Caco-2 (cell line): ENCODE measurements at regions of chrX and their contacts with region 1.

Region 1: DNA sequence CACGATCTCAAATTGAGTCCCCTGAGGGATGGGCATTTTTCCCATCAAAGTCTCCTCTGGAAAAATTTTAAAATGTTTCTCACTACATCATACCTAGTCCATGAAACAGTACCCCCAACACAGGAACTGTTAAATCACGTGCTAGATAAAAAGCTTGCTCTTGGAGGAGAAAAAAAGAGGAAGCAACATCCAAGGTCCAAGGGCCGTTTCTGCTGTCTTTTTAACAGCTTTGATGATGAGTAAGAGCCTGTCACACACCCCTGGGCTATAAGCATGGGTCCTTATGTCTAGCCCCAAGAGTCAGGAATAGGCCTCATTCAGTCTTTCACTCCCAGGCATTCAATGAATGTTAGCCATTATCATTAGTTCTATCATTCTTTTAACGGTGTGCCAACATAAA is 128.9 kb downstream of the SH3KBP1 start:
- DNase-seq: peak; percentile 31 to 69
- H3K4me3 ChIP-seq: no peak overlapping the region
- H3K4me3 Mint-ChIP-seq: peak overlapping the region; percentile 16
- H3K27ac Mint-ChIP-seq: peak overlapping the region; percentile 77
- H3K4me1 ChIP-seq: peaks cover 70% of the 10 kb centered on the region
- H3K4me1 Mint-ChIP-seq: peaks cover 45% of the 10 kb centered on the region
- H3K27me3 ChIP-seq: no peaks in the 10 kb centered on the region
- H3K27me3 Mint-ChIP-seq: no peaks in the 10 kb centered on the region
- CTCF ChIP-seq: no peak

Region 2: DNA sequence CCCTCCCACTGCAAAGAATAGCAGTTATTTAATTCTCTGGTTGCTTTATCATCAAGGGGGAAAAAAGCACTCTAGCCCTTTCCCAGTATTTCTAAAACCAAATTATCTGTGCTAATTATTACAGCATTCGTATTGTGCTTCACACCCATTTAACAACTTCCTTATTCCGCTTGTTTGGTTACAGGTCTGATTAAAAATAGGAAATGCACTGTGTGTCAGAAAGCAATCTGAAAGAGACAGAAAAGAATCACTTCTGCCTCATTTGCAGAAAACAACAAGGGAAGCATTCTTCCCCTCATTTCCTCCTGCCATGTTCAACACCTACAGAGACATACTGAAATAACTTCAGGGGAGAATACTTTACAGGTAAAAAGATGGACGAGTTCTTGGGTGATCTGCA is 128.3 kb before region 1 on chrX:
- CTCF ChIA-PET with region 1: no interaction called
- POLR2A ChIA-PET with region 1: no interaction called
- intact Hi-C with region 1: loop called (anchors 5 kb)
- DNase-seq: no peak
- H3K4me3 ChIP-seq: no peak overlapping the region; the same call in 1 of the 2 replicates
- H3K4me3 Mint-ChIP-seq: peak overlapping the region; percentile 64
- H3K27ac Mint-ChIP-seq: peak overlapping the region; percentile 92
- H3K4me1 ChIP-seq: peaks cover 17% of the 10 kb centered on the region
- H3K4me1 Mint-ChIP-seq: peaks cover 22% of the 10 kb centered on the region
- H3K27me3 ChIP-seq: no peaks in the 10 kb centered on the region
- H3K27me3 Mint-ChIP-seq: no peaks in the 10 kb centered on the region
- CTCF ChIP-seq: no peak

Region 3: GRCh38 chrX:19739683-19740082 is 18.9 kb before region 1 on chrX:
- CTCF ChIA-PET with region 1: interaction called, 4 read pairs
- POLR2A ChIA-PET with region 1: interaction called, 3 read pairs
- intact Hi-C with region 1: loop called (anchors 1 kb)
- DNase-seq: peak; percentile 60 to 71
- H3K4me3 ChIP-seq: no peak overlapping the region
- H3K4me3 Mint-ChIP-seq: peak overlapping the region; percentile 41
- H3K27ac Mint-ChIP-seq: peak overlapping the region; percentile 85
- H3K4me1 ChIP-seq: peaks cover 17% of the 10 kb centered on the region
- H3K4me1 Mint-ChIP-seq: peaks cover 25% of the 10 kb centered on the region
- H3K27me3 ChIP-seq: no peaks in the 10 kb centered on the region
- H3K27me3 Mint-ChIP-seq: no peaks in the 10 kb centered on the region
- CTCF ChIP-seq: peak; percentile 54 to 69

Region 4: DNA sequence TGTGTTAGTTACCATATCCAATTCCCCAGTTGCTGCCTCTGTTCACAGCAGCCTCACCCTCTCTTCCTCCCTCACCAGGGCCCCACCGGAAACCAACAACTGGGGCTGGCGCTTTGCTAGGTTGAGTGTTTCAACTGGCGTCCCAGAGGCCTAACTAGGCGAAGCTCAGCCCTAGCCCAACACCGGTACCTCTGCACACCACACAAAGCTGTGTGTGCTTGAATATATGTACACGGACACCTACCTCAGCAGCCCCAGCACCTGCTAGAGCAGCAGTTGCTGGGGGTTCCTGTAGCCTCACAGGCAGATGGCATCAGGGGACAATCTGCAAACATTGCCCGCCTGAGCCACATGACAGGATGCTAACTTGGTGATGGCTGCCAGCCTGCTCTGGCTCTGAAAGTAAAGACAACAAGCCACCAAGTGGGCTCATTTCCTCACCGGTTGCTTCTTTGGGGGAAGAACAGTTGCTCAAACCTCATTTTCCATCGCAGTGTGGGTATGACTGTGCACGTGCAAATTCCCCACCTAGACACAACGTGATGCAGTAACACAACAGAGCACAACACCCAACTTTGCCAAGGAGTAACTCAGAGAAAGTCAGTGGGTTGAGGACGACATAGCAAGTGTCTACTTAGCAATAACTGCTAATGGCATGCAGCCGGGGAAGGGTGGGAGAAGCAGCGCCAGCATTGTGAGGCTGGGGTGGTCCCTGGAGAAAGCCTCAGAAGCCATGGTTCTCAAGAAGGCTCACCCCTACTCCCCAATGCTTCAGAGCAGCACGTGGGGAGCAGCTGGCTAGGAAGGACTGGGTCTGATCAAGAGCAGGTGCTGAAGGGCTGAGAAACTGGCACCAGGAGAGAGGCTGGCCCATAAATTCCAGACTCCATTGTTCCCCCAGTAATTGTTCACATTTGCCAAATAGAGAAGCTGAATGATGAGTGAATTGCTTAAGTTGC is 10.6 kb before region 1 on chrX:
- CTCF ChIA-PET with region 1: no interaction called
- POLR2A ChIA-PET with region 1: interaction called, 10 read pairs
- intact Hi-C with region 1: no loop called
- DNase-seq: no peak
- H3K4me3 ChIP-seq: no peak overlapping the region
- H3K4me3 Mint-ChIP-seq: no peak overlapping the region
- H3K27ac Mint-ChIP-seq: no peak overlapping the region
- H3K4me1 ChIP-seq: 0 out of 2 replicates have a peak, but pooled peaks cover 11% of the 10 kb centered on the region
- H3K4me1 Mint-ChIP-seq: no peaks in the 10 kb centered on the region
- H3K27me3 ChIP-seq: no peaks in the 10 kb centered on the region
- H3K27me3 Mint-ChIP-seq: no peaks in the 10 kb centered on the region
- CTCF ChIP-seq: no peak

Region 5: GRCh38 chrX:19840899-19841648 is 82.5 kb after region 1 on chrX:
- CTCF ChIA-PET with region 1: no interaction called
- POLR2A ChIA-PET with region 1: no interaction called
- intact Hi-C with region 1: loop called (anchors 5 kb)
- DNase-seq: peak; percentile 52 to 63
- H3K4me3 ChIP-seq: no peak overlapping the region
- H3K4me3 Mint-ChIP-seq: peak overlapping the region; percentile 36
- H3K27ac Mint-ChIP-seq: peak overlapping the region; percentile 57
- H3K4me1 ChIP-seq: peaks cover 12% of the 10 kb centered on the region
- H3K4me1 Mint-ChIP-seq: peaks cover 12% of the 10 kb centered on the region
- H3K27me3 ChIP-seq: no peaks in the 10 kb centered on the region
- H3K27me3 Mint-ChIP-seq: no peaks in the 10 kb centered on the region
- CTCF ChIP-seq: no peak